PC-9 (cell line): ENCODE measurements at regions of chr9 and their contacts with region 1.

Region 1: DNA sequence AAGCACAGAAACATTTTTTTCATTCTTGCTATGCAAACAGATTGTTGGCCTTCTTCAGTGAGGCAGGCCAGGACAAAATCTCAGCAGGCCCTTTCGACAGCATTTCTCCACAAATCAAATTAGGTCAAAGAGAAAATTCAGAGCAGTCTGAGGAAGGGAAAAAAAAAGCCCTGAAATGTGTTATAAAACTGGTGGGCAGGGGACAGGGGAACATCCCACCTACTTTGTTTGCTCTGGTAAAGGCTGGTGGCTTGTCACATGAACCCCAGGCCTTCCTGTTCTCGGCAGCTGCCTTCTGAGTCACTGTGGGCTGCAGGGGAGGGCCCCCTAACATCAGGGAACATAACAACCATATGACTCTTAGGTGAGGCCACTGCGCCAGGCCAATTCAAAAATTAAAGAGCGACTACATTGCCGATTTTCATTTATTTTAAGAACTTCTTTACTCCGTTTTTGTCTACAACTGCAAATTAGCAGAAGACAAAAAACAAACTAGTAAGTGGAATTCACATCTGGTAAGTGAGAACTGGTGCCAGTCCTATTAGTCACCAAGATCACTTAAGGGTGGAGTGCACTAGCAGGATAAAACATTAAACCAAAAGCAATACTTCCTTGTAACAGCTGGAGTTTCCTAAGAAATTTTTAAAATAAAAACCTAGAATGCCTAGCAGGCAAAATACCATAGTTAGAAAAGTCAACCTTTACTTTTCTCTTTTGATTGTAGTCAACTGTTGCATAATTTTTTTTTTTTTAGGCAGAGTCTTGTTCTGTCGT is 46.2 kb upstream of the DENND4C start:
- DNase-seq: peak; percentile 58 to 84
- H3K4me3 ChIP-seq: peak overlapping the region; percentile 23; the same call in 1 of the 2 replicates
- H3K27ac ChIP-seq: peak overlapping the region; percentile 84
- H3K4me1 ChIP-seq: peaks cover 50% of the 10 kb centered on the region
- H3K27me3 ChIP-seq: no peaks in the 10 kb centered on the region
- CTCF ChIP-seq: no peak

Region 2: GRCh38 chr9:17425384-17425783 is 1758.9 kb before region 1 on chr9:
- CTCF ChIA-PET with region 1: interaction called, 12 read pairs
- POLR2A ChIA-PET with region 1: no interaction called
- intact Hi-C with region 1: no loop called
- DNase-seq: no peak
- H3K4me3 ChIP-seq: no peak overlapping the region
- H3K27ac ChIP-seq: no peak overlapping the region
- H3K4me1 ChIP-seq: no peaks in the 10 kb centered on the region
- H3K27me3 ChIP-seq: no peaks in the 10 kb centered on the region
- CTCF ChIP-seq: no peak

Region 3: DNA sequence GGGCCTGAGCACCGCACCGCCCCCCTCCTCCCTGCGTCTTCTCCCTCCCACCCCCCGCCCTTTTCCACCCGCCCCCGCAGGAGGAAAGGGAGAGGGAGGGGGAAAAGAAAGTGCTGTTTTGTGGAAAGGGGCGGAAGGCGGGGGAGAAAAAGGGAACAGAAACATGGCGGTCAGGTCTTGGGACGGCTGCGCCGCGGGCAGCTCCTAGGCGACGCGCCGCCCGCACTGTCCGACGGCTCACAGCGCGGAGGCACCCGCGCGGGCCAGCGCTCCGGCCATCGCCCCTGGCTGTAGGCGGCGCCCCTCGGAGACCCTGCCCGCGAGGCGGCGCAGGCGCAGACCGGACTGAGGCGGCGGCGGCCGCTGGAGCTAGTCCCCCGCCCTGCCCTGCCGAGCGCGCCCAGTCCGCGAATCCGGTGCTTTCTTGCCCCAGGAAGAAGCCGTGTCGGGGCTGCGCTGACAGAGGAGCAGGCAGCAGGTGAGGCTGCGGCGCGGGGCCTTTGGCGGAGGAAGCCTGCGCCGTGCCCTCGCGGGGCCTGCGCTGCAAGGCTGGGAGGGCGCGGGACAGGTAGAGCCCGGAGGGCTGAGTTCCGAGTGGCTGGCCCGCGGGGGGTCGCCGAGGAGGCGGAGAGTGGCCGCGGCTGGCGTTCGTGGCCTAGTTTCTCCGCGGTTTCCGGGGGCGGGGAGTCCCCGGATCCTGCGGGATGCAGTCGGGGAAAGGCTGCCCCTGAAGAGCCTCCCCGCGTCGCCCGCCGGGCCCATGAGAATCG is 46.2 kb after region 1 on chr9 and contains the start of gene DENND4C:
- CTCF ChIA-PET with region 1: no interaction called
- POLR2A ChIA-PET with region 1: interaction called, 3 read pairs
- intact Hi-C with region 1: loop called (anchors 2 kb)
- DNase-seq: peak; percentile 68 to 86
- H3K4me3 ChIP-seq: peak within 1 kb of the TSS; percentile 85
- H3K27ac ChIP-seq: peak within 1 kb of the TSS; percentile 68
- H3K4me1 ChIP-seq: peaks cover 16% of the 10 kb centered on the region
- H3K27me3 ChIP-seq: no peaks in the 10 kb centered on the region
- CTCF ChIP-seq: no peak
- total RNA-seq, gene DENND4C: 23.1 and 29.5 TPM in 2 replicates

Region 4: DNA sequence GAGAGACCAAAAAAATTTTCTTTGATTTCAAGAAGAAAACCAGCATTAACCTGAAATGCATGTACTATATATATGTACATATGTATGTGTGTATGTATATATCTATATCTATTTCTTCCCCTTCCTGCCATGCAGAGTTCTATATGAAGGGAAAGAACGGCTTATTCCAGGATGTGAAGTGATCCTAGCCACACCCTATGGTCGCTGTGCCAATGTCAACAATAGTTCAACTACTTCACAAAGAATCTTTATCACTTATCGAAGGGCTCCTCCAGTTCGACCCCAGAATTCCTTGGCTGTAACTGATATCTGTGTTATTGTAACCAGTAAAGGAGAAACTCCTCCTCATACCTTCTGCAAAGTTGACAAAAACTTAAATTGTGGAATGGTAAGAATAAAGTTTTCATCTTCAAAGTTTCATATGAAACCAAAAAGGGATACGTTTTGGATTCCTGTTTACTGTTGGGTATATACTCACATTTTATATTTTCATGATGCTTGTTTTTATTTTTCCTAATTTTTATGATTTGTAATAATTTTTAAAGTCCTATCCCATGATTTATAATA is 102.4 kb after region 1 on chr9:
- CTCF ChIA-PET with region 1: no interaction called
- POLR2A ChIA-PET with region 1: interaction called, 4 read pairs
- intact Hi-C with region 1: loop called (anchors 5 kb)
- DNase-seq: no peak
- H3K4me3 ChIP-seq: no peak overlapping the region
- H3K27ac ChIP-seq: no peak overlapping the region
- H3K4me1 ChIP-seq: no peaks in the 10 kb centered on the region
- H3K27me3 ChIP-seq: no peaks in the 10 kb centered on the region
- CTCF ChIP-seq: no peak

Region 5: GRCh38 chr9:19408693-19409400 is 224.5 kb after region 1 on chr9 and contains the start of gene ACER2:
- CTCF ChIA-PET with region 1: no interaction called
- POLR2A ChIA-PET with region 1: no interaction called
- intact Hi-C with region 1: loop called (anchors 5 kb)
- DNase-seq: peak; percentile 78 to 93
- H3K4me3 ChIP-seq: peak within 1 kb of the TSS; percentile 83
- H3K27ac ChIP-seq: peak within 1 kb of the TSS; percentile 37; the same call in 1 of the 2 replicates
- H3K4me1 ChIP-seq: peaks cover 50% of the 10 kb centered on the region
- H3K27me3 ChIP-seq: no peaks in the 10 kb centered on the region
- CTCF ChIP-seq: no peak
- total RNA-seq, gene ACER2: 3.8 and 4.3 TPM in 2 replicates